ENCODE measurements at regions of chr19 and their contacts with region 1.

Region 1: GRCh38 chr19:2983351-2984195 is 6.2 kb downstream of the TLE6 start:
- DNase-seq: peak; percentile 43 to 77 (median 62)
- H3K4me3 ChIP-seq: peak overlapping the region; percentile 29
- H3K27ac ChIP-seq: peak overlapping the region; percentile 36 to 65
- H3K4me1 ChIP-seq: peaks cover 11% of the 10 kb centered on the region
- H3K27me3 ChIP-seq: no peaks in the 10 kb centered on the region
- CTCF ChIP-seq: no peak
- EP300 ChIP-seq: peak; percentile 81
- POLR2A ChIP-seq: no peak

Region 2: GRCh38 chr19:3029065-3029923 is 45.7 kb after region 1 on chr19 and contains the start of gene TLE2:
- intact Hi-C with region 1: loop called in 2 of 4 experiments (anchors 5 kb)
- DNase-seq: peak in 1 of 5 donors; percentile 52
- H3K4me3 ChIP-seq: peak within 1 kb of the TSS; percentile 76
- H3K27ac ChIP-seq: peak within 1 kb of the TSS; percentile 51 to 53
- H3K4me1 ChIP-seq: no peaks in the 10 kb centered on the region
- H3K27me3 ChIP-seq: no peaks in the 10 kb centered on the region
- CTCF ChIP-seq: no peak
- EP300 ChIP-seq: no peak
- POLR2A ChIP-seq: no peak
- total RNA-seq, gene TLE2: 31.1 to 43.9 (median 36.4) TPM

Region 3: DNA sequence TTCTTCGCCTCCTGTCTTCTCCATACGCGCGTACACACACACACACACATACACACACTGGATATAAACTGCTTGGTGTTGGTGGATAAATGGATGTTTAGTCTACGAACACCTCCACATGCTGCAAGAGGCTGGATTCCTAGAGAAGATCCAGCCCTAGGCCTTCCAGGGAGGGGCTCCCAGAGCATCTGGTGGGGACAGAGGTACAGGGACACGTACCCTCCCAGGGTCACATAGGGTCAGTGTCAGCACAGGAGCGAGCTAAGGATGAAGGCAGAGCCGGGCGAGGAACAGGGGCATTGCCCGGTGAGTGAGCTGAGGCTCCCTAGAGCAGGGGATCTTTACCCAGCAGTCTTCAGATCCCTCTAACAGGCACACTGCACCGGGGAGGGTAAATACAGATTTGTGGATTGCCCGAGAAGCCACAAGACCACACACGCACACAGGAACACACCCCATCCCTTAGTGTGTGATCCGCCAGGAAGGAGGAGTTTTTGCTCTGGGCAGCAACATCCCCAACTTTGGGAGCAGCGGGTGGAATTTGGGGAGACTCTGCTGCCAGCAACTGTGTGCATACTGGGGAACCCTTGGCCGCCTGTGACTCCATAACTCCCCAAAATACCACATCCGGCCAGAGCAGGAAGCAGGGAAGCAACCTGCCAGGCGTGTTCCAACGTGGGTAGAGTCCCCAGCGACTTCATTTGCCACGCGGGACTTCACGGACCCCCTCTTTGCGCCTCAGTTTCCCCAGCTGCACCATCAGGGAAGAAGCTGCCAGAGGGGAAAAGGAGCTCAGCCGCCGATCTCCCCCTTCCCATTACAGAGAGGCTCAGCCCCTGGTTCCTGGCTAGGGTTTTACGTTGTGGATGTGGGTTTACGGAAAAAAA is 51.3 kb after region 1 on chr19:
- intact Hi-C with region 1: loop called in 1 of 4 experiments (anchors 5 kb)
- DNase-seq: peak in 3 of 5 donors; percentile 58 to 68 (median 66)
- H3K4me3 ChIP-seq: peak overlapping the region; percentile 68
- H3K27ac ChIP-seq: peak overlapping the region in 1 of 2 donors; percentile 37
- H3K4me1 ChIP-seq: peaks cover 7% of the 10 kb centered on the region
- H3K27me3 ChIP-seq: no peaks in the 10 kb centered on the region
- CTCF ChIP-seq: no peak
- EP300 ChIP-seq: no peak
- POLR2A ChIP-seq: peak; percentile 32

Measured in ovary (tissue), 10 donors.